Right cardiac atrium (tissue), 5 donors: ENCODE measurements at regions of chr11 and their contacts with region 1.

Region 1: GRCh38 chr11:73965076-73965860 is 14.4 kb downstream of the DNAJB13 start:
- DNase-seq: no peak
- ATAC-seq: peak in 1 of 2 donors; percentile 8
- H3K4me3 ChIP-seq: no peak overlapping the region
- H3K27ac ChIP-seq: no peak overlapping the region
- H3K4me1 ChIP-seq: no peaks in the 10 kb centered on the region
- H3K27me3 ChIP-seq: no peaks in the 10 kb centered on the region

Region 2: GRCh38 chr11:73851046-73851764 is 114.1 kb before region 1 on chr11:
- intact Hi-C with region 1: no loop called
- DNase-seq: no peak
- ATAC-seq: peak; percentile 79 to 90
- H3K4me3 ChIP-seq: no peak overlapping the region
- H3K27ac ChIP-seq: peak overlapping the region; percentile 43
- H3K4me1 ChIP-seq: no peaks in the 10 kb centered on the region
- H3K27me3 ChIP-seq: no peaks in the 10 kb centered on the region

Region 3: DNA sequence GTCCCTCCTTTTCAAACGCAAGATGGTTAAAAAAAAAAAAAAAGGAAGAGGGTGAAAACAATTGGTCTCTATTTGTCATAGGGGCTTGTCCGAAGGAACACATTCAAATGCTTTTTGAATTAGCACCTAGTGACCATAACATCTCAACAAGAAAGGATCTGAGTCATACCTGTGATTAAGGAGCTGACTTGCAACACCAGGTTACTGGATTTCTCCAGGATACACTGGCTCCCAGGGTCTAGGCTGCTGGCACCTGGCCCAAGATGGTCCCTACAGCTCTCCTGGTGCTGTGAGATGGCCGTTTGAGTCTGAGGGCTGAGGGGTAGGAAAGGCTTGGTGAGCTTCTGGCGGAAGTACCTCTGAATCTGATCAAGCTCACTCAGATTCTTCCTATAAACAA is 72.0 kb after region 1 on chr11:
- intact Hi-C with region 1: loop called in 1 of 4 experiments (anchors 10 kb)
- DNase-seq: no peak
- ATAC-seq: no peak
- H3K4me3 ChIP-seq: no peak overlapping the region
- H3K27ac ChIP-seq: no peak overlapping the region
- H3K4me1 ChIP-seq: no peaks in the 10 kb centered on the region
- H3K27me3 ChIP-seq: no peaks in the 10 kb centered on the region